Head of caudate nucleus (tissue), 42 donors: ENCODE measurements at regions of chr7 and their contacts with region 1.

Region 1: GRCh38 chr7:44242091-44242490 is 41.3 kb downstream of the YKT6 start:
- DNase-seq: no peak

Region 2: GRCh38 chr7:44477980-44478379 is 235.9 kb after region 1 on chr7:
- intact Hi-C with region 1: loop called (anchors 2 kb)
- DNase-seq: no peak